ENCODE measurements at regions of chr3 and their contacts with region 1.

Region 1: DNA sequence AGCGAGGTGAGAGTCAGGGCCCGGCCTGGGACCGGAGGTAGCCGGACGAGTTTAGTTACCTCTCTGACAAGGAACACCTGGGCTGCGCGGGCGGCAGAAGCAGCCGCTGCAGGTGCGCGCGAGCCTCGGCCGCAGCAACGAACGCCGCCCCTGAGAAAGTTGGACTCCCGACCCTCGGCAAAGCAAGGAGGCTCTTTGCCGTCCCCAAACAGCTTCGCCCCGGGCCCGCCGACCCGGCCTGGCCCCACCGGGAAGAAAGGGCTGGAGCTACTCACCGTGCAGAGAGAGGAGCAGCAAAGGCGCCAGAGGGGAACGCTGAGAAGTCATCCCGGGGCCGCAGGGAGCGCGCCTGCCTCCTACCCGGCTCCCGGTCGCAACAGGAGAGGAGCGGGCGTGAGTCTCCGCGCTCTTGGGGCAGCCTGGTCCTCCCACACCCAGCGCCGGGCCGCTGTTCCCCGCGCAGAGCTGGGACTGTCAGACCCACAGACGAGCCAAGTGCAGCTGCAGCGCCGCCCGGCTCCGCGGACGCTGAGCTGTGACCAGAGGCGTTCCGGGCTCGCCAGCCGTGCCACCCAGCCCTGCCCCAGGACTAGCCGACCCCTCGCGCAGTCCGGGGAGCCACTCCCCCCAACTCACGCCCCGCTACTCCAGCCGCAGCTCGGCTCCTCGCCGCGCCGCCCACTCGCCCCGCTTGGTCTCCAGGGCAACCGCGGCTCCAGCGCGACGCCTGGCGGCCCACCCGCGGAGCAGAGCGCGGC is at the start of gene IGSF11:
- DNase-seq: peak; percentile 79
- H3K4me3 Mint-ChIP-seq: peak within 1 kb of the TSS; percentile 79
- H3K27ac Mint-ChIP-seq: no peak within 1 kb of the TSS
- H3K4me1 Mint-ChIP-seq: peaks cover 8% of the 10 kb centered on the region
- H3K27me3 Mint-ChIP-seq: peaks cover 13% of the 10 kb centered on the region
- CTCF ChIP-seq: no peak
- total RNA-seq, gene IGSF11: 0.45 and 0.56 TPM in 2 replicates

Region 2: GRCh38 chr3:119084371-119085072 is 50.1 kb after region 1 on chr3:
- CTCF ChIA-PET with region 1: interaction called, 3 read pairs
- intact Hi-C with region 1: loop called (anchors 5 kb)
- DNase-seq: peak; percentile 74
- H3K4me3 Mint-ChIP-seq: no peak overlapping the region
- H3K27ac Mint-ChIP-seq: no peak overlapping the region
- H3K4me1 Mint-ChIP-seq: peaks cover 26% of the 10 kb centered on the region
- H3K27me3 Mint-ChIP-seq: no peaks in the 10 kb centered on the region
- CTCF ChIP-seq: no peak

Region 3: DNA sequence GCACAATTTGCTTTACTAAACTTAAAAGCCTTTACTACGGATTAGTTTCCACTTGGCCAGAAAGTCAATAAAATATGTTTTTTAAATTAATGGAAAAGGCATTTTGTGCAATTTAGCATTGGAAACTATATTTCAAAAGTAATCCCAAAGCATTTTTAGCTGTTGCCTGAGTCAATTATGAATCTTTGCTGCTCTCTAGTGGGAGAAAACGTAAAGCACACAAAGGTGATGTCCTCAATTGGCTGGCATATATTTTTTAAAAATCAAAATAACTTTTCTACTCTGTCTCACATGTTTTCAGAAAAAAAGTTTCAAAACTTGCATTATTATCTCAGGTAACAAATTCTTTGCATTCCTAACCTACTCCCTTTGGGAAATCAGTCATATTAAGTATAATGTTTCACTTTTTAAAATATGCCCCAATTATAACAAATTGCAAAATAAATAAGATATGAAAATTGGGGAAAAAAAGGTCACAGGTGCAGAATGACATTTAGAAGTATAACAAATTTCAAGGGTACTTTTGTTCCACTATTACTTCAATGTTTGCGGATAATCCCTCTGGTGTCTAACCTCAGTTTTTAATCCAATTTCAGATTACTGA is 64.3 kb after region 1 on chr3:
- CTCF ChIA-PET with region 1: no interaction called
- intact Hi-C with region 1: loop called (anchors 5 kb)
- DNase-seq: peak; percentile 34
- H3K4me3 Mint-ChIP-seq: no peak overlapping the region
- H3K27ac Mint-ChIP-seq: no peak overlapping the region
- H3K4me1 Mint-ChIP-seq: no peaks in the 10 kb centered on the region
- H3K27me3 Mint-ChIP-seq: no peaks in the 10 kb centered on the region
- CTCF ChIP-seq: peak; percentile 54

Region 4: DNA sequence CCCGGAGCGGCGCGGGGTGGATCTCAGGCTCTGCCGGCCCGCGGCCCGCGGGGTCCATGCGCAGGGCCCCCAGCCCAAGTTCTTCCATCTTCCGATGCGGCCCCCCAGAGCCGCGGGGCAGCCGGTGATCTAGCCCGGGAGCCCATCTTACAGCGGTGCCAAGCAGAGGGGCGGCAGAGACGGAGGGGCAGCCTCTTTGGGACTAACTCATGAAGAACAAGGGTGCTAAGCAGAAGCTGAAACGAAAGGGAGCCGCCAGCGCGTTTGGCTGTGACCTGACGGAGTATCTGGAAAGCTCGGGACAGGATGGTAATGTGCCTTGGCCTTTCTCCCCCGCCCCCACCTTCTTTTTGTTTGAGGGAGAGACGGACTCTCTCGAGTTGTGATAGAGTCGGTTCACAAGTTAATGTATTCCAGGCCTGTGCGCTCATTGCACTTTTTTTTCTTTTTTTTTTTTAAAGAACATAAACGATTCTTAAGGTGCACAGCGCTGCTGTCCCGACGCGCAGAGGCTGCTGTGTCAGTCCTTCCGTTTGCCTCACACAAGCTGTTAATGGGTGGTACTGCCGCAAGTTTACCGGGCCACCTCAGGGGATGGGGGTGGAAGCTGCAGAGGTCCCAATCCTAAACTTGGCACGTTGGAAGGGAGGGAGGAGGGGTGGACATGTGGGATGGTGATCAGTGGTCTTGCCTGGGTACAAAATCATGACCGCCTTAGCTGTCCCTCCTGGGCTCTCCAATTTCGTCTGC is 260.4 kb after region 1 on chr3:
- CTCF ChIA-PET with region 1: no interaction called
- intact Hi-C with region 1: no loop called
- DNase-seq: peak; percentile 14
- H3K4me3 Mint-ChIP-seq: peak overlapping the region; percentile 81
- H3K27ac Mint-ChIP-seq: no peak overlapping the region
- H3K4me1 Mint-ChIP-seq: peaks cover 15% of the 10 kb centered on the region
- H3K27me3 Mint-ChIP-seq: peaks cover 27% of the 10 kb centered on the region
- CTCF ChIP-seq: no peak

Region 5: DNA sequence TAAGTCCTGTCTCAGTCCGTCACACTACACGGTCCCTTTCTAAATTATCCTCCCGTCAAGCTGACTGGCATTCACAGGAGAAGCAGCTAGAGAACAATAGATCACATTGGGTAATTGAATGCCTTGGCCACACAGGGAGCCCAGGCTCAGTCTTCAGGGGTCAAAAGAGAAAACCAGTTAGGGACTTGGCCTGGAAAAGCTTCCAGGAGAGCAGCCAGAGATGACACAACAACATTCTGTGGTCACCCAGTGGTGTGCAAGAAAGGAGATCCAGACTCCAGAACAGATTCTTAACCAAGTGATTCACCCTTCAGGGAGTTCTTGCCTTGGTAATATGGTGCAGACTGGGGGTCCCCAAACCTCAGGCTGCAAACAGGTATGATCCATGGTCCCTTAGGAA is 275.6 kb after region 1 on chr3:
- CTCF ChIA-PET with region 1: no interaction called
- intact Hi-C with region 1: no loop called
- DNase-seq: no peak
- H3K4me3 Mint-ChIP-seq: no peak overlapping the region
- H3K27ac Mint-ChIP-seq: no peak overlapping the region
- H3K4me1 Mint-ChIP-seq: no peaks in the 10 kb centered on the region
- H3K27me3 Mint-ChIP-seq: no peaks in the 10 kb centered on the region
- CTCF ChIP-seq: no peak

Measured in Calu3 (cell line).